ENCODE measurements at regions of chr7 and their contacts with region 1.

Region 1: GRCh38 chr7:27364344-27365100 is 121.9 kb downstream of the EVX1 start:
- DNase-seq: peak; percentile 29 to 65
- ATAC-seq: peak; percentile 91 to 96
- H3K4me3 ChIP-seq: no peak overlapping the region
- H3K27ac ChIP-seq: peak overlapping the region; percentile 55 to 73 (median 66)
- H3K4me1 ChIP-seq: peaks cover 7 to 13% of the 10 kb centered on the region in 2 donors
- H3K27me3 ChIP-seq: no peaks in the 10 kb centered on the region
- CTCF ChIP-seq: no peak
- POLR2A ChIP-seq: no peak

Region 2: DNA sequence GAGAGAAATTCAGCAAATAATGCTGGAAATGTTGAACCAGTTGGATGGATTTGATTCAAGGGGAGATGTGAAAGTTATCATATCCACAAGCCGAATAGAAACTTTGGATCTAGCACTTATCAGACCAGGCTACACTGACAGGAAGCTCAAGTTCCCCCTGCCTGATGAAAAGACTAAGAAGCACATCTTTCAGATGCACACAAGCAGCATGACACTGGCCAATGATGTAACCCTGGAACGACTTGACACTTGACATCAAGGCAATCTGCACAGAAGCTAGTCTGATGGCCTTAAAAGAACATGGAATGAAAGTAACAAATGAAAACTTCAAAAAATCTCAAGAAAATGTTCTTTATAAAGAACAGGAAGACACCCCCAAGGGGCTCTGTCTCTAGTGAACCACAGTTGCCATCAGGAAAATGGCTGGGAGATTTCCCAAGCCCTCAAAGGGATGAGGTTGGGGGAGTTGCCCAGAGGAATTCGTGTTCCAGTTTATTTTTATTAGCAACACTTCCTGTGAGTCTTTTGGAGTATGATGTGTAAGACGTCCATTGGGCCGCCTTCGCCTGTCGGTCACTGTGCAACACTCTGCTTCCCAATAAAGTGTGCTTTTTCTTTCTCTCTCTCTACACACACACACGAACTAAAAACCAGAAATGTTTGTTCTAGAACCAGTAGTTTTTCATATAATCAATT is 98.2 kb after region 1 on chr7:
- in situ Hi-C with region 1: no loop called
- intact Hi-C with region 1: loop called (anchors 10 kb)
- DNase-seq: peak in 1 of 2 donors; percentile 21
- ATAC-seq: peak; percentile 13 to 63
- H3K4me3 ChIP-seq: no peak overlapping the region
- H3K27ac ChIP-seq: peak overlapping the region; percentile 3 to 46 (median 36)
- H3K4me1 ChIP-seq: no peaks in the 10 kb centered on the region
- H3K27me3 ChIP-seq: peaks cover 3 to 7% (median 4%) of the 10 kb centered on the region in 3 donors
- CTCF ChIP-seq: no peak
- POLR2A ChIP-seq: no peak

Measured in gastrocnemius medialis (tissue), 4 donors.